MCF 10A (cell line): ENCODE measurements at regions of chr18 and their contacts with region 1.

Region 1: GRCh38 chr18:31722369-31722957 is 38.1 kb upstream of the B4GALT6 start:
- DNase-seq: peak; percentile 89
- H3K4me3 Mint-ChIP-seq: no peak overlapping the region
- H3K27ac Mint-ChIP-seq: no peak overlapping the region
- H3K4me1 Mint-ChIP-seq: no peaks in the 10 kb centered on the region
- H3K27me3 Mint-ChIP-seq: no peaks in the 10 kb centered on the region
- CTCF ChIP-seq: peak; percentile 84

Region 2: GRCh38 chr18:30971338-30971956 is 751.0 kb before region 1 on chr18:
- CTCF ChIA-PET with region 1: no interaction called
- POLR2A ChIA-PET with region 1: no interaction called
- intact Hi-C with region 1: loop called (anchors 2 kb)
- DNase-seq: peak; percentile 52
- H3K4me3 Mint-ChIP-seq: no peak overlapping the region
- H3K27ac Mint-ChIP-seq: no peak overlapping the region
- H3K4me1 Mint-ChIP-seq: no peaks in the 10 kb centered on the region
- H3K27me3 Mint-ChIP-seq: no peaks in the 10 kb centered on the region
- CTCF ChIP-seq: peak; percentile 36

Region 3: DNA sequence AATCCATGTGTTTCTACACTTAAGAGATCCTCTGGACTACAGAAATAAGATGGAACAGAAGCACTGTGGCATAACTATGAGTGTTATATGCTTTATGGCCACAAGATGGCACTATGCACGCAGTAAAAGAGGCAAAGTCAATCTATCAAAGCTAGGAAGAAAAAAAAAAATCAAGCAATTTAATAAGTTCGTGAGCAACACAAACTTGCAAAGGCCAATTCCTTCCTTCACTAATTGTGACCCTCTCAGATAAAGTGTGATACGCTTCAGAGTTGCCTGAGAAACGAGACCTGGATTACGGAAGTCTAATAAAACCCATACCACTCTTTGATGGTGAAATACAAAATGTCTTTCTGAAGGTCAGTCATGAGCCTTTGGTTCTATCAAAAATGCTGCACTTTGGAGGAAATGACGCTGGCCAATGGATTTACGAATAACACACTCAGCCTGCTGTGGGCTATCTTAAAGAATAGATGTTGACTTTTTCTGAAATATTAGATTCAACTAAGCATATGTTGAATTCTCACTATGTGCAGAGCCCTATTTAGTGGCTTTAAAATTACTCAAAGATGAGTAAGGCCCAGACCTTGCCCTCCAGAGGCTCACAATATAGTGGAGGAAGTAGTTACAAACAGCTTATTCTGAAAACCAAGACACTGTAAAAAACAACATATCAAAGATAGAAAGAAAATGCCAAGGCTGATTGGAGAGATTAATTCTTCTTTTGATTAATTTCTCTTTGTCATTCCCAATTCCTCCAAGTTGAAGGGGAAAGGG is 166.3 kb before region 1 on chr18:
- CTCF ChIA-PET with region 1: interaction called, 93 read pairs
- POLR2A ChIA-PET with region 1: interaction called, 11 read pairs
- intact Hi-C with region 1: loop called (anchors 1 kb)
- DNase-seq: peak; percentile 77
- H3K4me3 Mint-ChIP-seq: no peak overlapping the region
- H3K27ac Mint-ChIP-seq: no peak overlapping the region
- H3K4me1 Mint-ChIP-seq: peaks cover 6% of the 10 kb centered on the region
- H3K27me3 Mint-ChIP-seq: no peaks in the 10 kb centered on the region
- CTCF ChIP-seq: peak; percentile 76

Region 4: DNA sequence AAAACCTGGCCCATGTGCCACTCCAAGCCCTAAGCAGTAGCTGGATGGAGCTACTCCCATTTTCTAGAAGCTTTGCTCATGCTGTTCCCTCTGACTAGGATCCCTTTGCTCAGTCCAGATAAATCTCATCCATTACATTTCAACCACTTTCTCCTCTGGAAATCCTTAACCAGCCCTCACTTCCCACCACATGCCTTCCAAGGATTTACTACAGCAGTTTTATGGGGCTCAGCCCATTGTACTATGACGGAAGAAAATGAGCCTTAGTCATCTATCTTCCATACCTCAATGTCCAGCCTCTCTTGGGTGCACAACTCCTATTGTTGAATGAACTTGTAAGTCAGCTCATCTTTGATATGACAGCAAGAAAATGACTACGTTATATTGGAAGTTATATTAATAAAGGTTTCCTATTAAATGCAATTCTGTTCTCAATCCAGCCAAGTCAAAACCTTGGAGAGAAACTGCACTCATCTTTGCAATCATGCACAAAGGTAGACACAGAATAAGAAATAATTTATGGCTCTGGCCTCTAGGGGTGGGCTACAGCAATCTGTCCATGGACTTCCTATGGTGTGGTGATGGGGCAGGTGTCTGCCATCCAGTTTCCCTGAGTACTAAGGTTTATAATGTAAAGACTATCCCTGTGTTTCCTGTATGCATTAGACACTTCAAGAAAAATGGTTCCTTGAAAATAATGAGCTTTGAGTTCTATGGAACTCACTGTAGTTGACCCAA is 41.5 kb before region 1 on chr18:
- CTCF ChIA-PET with region 1: interaction called, 10 read pairs
- POLR2A ChIA-PET with region 1: interaction called, 7 read pairs
- intact Hi-C with region 1: no loop called
- DNase-seq: peak; percentile 18
- H3K4me3 Mint-ChIP-seq: no peak overlapping the region
- H3K27ac Mint-ChIP-seq: peak overlapping the region; percentile 57
- H3K4me1 Mint-ChIP-seq: peaks cover 44% of the 10 kb centered on the region
- H3K27me3 Mint-ChIP-seq: no peaks in the 10 kb centered on the region
- CTCF ChIP-seq: no peak

Region 5: GRCh38 chr18:31710826-31711225 is 11.6 kb before region 1 on chr18:
- CTCF ChIA-PET with region 1: interaction called, 15 read pairs
- POLR2A ChIA-PET with region 1: interaction called, 5 read pairs
- intact Hi-C with region 1: no loop called
- DNase-seq: peak; percentile 22
- H3K4me3 Mint-ChIP-seq: no peak overlapping the region
- H3K27ac Mint-ChIP-seq: no peak overlapping the region
- H3K4me1 Mint-ChIP-seq: peaks cover 9% of the 10 kb centered on the region
- H3K27me3 Mint-ChIP-seq: no peaks in the 10 kb centered on the region
- CTCF ChIP-seq: no peak

Region 6: DNA sequence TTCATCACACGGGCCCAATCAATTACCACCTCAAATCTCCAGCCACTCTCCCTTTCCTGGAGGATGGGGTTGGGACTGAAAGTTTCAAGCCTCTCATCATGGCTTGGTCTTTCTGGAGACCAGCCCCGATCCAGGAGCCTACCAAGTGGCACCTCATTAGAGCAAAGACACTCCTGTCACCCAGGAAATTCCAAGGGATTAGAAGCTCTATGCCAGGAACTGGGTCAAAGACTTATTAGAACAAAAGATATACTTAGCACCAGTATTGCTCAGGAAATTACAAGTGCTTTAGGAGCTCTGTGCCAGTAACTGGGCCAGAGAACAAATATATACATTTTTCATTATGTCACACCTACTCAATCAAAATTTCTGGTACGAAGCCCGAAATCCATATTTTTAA is 23.9 kb after region 1 on chr18:
- CTCF ChIA-PET with region 1: interaction called, 28 read pairs
- POLR2A ChIA-PET with region 1: no interaction called
- intact Hi-C with region 1: no loop called
- DNase-seq: no peak
- H3K4me3 Mint-ChIP-seq: no peak overlapping the region
- H3K27ac Mint-ChIP-seq: no peak overlapping the region
- H3K4me1 Mint-ChIP-seq: no peaks in the 10 kb centered on the region
- H3K27me3 Mint-ChIP-seq: no peaks in the 10 kb centered on the region
- CTCF ChIP-seq: no peak